ENCODE measurements at regions of chr15 and their contacts with region 1.

Region 1: GRCh38 chr15:83199288-83199687 is 8.3 kb downstream of the HDGFL3 start:
- DNase-seq: peak; percentile 22
- H3K4me3 Mint-ChIP-seq: no peak overlapping the region
- H3K27ac Mint-ChIP-seq: no peak overlapping the region
- H3K4me1 Mint-ChIP-seq: peaks cover 18% of the 10 kb centered on the region
- H3K27me3 Mint-ChIP-seq: peaks cover 19% of the 10 kb centered on the region

Region 2: GRCh38 chr15:82919231-82919886 is 279.9 kb before region 1 on chr15:
- CTCF ChIA-PET with region 1: no interaction called
- POLR2A ChIA-PET with region 1: no interaction called
- intact Hi-C with region 1: no loop called
- DNase-seq: no peak
- H3K4me3 Mint-ChIP-seq: no peak overlapping the region
- H3K27ac Mint-ChIP-seq: no peak overlapping the region
- H3K4me1 Mint-ChIP-seq: no peaks in the 10 kb centered on the region
- H3K27me3 Mint-ChIP-seq: no peaks in the 10 kb centered on the region

Region 3: GRCh38 chr15:83066734-83067637 is 132.3 kb before region 1 on chr15 and contains the start of gene BTBD1:
- CTCF ChIA-PET with region 1: interaction called, 3 read pairs
- POLR2A ChIA-PET with region 1: interaction called, 3 read pairs
- intact Hi-C with region 1: loop called (anchors 1 kb)
- DNase-seq: peak; percentile 96
- H3K4me3 Mint-ChIP-seq: peak within 1 kb of the TSS; percentile 86
- H3K27ac Mint-ChIP-seq: peak within 1 kb of the TSS; percentile 85
- H3K4me1 Mint-ChIP-seq: peaks cover 27% of the 10 kb centered on the region
- H3K27me3 Mint-ChIP-seq: no peaks in the 10 kb centered on the region
- total RNA-seq, gene BTBD1: 52.9 to 53.3 TPM

Region 4: DNA sequence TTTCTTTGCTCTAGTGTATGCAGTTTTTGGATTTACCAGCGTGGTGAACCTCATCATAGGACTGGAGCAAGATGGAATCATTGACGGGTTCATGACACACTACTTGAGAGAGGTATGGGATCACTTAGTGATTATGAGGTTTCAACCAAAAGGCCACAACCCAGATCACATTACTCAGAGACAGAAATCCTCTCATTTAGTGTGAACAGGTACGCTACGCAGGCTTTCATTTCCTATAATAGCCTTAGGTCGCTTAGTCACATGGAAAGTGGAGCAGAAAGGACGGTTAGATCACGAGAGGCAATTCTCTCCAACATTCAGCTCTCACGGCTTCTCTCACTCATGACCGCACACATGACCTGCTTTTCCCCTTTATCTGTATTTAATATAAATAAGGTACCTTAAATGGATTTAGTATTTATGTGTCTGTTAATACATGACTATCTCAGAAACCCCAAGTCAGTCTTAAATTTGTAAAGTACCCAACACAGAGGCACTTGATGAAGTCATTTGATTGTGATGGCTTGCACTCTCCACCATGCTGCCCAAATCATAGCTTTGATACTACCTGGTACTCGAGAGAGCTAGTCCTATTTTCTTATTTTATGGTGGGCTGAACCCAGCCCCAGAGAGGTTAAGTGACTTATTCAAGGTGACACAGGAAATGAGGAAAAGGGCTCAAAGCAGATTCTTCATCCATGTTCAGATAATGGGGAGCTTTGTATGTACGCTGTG is 83.3 kb before region 1 on chr15:
- CTCF ChIA-PET with region 1: no interaction called
- POLR2A ChIA-PET with region 1: no interaction called
- intact Hi-C with region 1: loop called (anchors 2 kb)
- DNase-seq: no peak
- H3K4me3 Mint-ChIP-seq: no peak overlapping the region
- H3K27ac Mint-ChIP-seq: peak overlapping the region; percentile 42
- H3K4me1 Mint-ChIP-seq: no peaks in the 10 kb centered on the region
- H3K27me3 Mint-ChIP-seq: peaks cover 5% of the 10 kb centered on the region

Region 5: DNA sequence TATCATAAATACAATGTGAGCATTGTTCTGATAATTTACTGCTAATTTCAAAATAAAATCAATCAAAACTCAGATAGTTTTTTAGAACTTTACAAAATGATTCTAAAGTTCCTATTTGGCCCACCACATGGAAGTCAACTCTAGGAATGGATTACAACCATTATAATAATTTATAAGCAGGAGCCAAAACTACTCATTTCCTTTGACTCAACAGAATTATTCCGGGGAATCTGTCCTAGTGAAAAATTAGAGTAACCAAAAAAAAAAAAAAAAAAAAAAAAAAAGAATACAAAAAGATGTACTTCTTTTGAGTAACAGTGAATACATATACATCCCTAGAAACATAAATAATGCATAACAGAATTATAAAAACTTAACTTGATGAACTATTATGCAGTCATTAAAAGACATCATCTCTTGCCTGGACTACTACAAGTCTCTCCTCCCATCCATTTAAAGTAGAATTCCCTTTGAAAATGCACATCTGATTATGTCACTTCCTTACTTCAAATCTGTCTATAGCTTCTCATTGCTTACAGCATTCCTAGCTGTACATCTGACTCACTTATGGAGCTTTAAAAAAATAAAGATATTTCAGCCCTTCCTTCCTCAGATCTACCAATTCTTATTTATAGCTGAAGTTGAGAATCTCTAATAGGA is 35.0 kb before region 1 on chr15:
- CTCF ChIA-PET with region 1: no interaction called
- POLR2A ChIA-PET with region 1: no interaction called
- intact Hi-C with region 1: loop called (anchors 2 kb)
- DNase-seq: no peak
- H3K4me3 Mint-ChIP-seq: no peak overlapping the region
- H3K27ac Mint-ChIP-seq: no peak overlapping the region
- H3K4me1 Mint-ChIP-seq: peaks cover 2% of the 10 kb centered on the region
- H3K27me3 Mint-ChIP-seq: peaks cover 30% of the 10 kb centered on the region

Measured in activated CD4-positive, alpha-beta memory T cell treated with anti-CD3 and anti-CD28 coated beads for 36 hours (primary cell).